ENCODE measurements at regions of chr4 and their contacts with region 1.

Region 1: GRCh38 chr4:189202182-189202868 is 738.3 kb upstream of the FRG1 start:
- DNase-seq: peak; percentile 59
- H3K4me3 ChIP-seq: peak overlapping the region in 2 of 3 experiments; percentile 34 to 47
- H3K27ac ChIP-seq: no peak overlapping the region
- H3K4me1 ChIP-seq: peaks cover 5% of the 10 kb centered on the region
- H3K27me3 ChIP-seq: no peaks in the 10 kb centered on the region
- CTCF ChIP-seq: peak; percentile 93 to 96

Region 2: GRCh38 chr4:187606581-187606980 is 1595.7 kb before region 1 on chr4:
- CTCF ChIA-PET with region 1: no interaction called
- dilution Hi-C with region 1: no loop called
- in situ Hi-C with region 1: no loop called
- intact Hi-C with region 1: loop called (anchors 5 kb)
- DNase-seq: peak; percentile 57
- H3K4me3 ChIP-seq: no peak overlapping the region
- H3K27ac ChIP-seq: no peak overlapping the region
- H3K4me1 ChIP-seq: peaks cover 16% of the 10 kb centered on the region
- H3K27me3 ChIP-seq: no peaks in the 10 kb centered on the region
- CTCF ChIP-seq: peak; percentile 87 to 89

Region 3: DNA sequence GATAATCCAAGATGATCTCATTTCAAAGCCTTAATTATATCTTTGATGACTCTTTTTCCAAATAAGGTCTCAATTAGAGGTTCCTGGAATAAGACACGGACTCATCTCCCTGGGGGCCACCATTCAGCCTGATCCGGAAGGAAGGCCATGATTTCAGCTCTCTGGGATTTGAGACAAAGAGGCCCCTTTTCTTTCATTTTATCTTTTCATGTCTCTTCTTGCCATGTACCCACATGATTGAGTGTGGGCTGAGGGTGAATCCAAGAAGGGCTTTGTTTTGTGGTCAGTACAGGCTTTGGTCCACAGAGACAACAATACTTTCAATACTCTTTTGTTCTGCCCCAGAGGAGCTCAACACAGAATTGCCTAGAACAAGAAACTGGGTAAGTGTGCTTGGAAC is 801.9 kb before region 1 on chr4:
- CTCF ChIA-PET with region 1: no interaction called
- dilution Hi-C with region 1: no loop called
- in situ Hi-C with region 1: no loop called
- intact Hi-C with region 1: loop called (anchors 10 kb)
- DNase-seq: peak; percentile 80
- H3K4me3 ChIP-seq: peak overlapping the region in 1 of 3 experiments; percentile 43
- H3K27ac ChIP-seq: peak overlapping the region; percentile 85
- H3K4me1 ChIP-seq: peaks cover 45% of the 10 kb centered on the region
- H3K27me3 ChIP-seq: no peaks in the 10 kb centered on the region
- CTCF ChIP-seq: no peak

Region 4: DNA sequence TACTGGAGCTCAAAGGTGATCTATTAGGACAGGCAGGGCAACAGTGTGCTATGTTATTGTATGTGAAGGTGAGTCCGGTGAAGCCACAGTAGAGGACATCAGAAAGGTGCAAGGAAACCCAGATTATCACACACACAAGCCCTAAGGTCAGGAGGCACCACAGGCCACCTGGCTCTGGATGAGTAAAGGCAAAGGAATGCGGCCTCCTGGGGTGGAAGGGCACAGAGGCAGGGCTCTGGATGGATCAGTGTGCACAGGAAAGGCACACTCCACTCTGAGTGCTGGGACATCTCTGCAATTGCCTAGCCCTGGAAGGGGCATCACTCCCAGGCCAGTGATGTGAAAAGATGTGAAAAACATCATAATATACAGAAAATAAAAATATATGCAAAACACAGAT is 379.6 kb before region 1 on chr4:
- CTCF ChIA-PET with region 1: no interaction called
- dilution Hi-C with region 1: no loop called
- in situ Hi-C with region 1: no loop called
- intact Hi-C with region 1: loop called (anchors 5 kb)
- DNase-seq: peak; percentile 21
- H3K4me3 ChIP-seq: no peak overlapping the region
- H3K27ac ChIP-seq: no peak overlapping the region
- H3K4me1 ChIP-seq: no peaks in the 10 kb centered on the region
- H3K27me3 ChIP-seq: no peaks in the 10 kb centered on the region
- CTCF ChIP-seq: no peak

Region 5: GRCh38 chr4:188971125-188971524 is 231.2 kb before region 1 on chr4:
- CTCF ChIA-PET with region 1: no interaction called
- dilution Hi-C with region 1: no loop called
- in situ Hi-C with region 1: no loop called
- intact Hi-C with region 1: loop called (anchors 1 kb)
- DNase-seq: peak; percentile 35
- H3K4me3 ChIP-seq: no peak overlapping the region
- H3K27ac ChIP-seq: no peak overlapping the region
- H3K4me1 ChIP-seq: peaks cover 1% of the 10 kb centered on the region
- H3K27me3 ChIP-seq: no peaks in the 10 kb centered on the region
- CTCF ChIP-seq: peak; percentile 42 to 62

Region 6: GRCh38 chr4:189162073-189162789 is 40.1 kb before region 1 on chr4:
- CTCF ChIA-PET with region 1: no interaction called
- dilution Hi-C with region 1: no loop called
- in situ Hi-C with region 1: no loop called
- intact Hi-C with region 1: no loop called
- DNase-seq: no peak
- H3K4me3 ChIP-seq: no peak overlapping the region
- H3K27ac ChIP-seq: no peak overlapping the region
- H3K4me1 ChIP-seq: no peaks in the 10 kb centered on the region
- H3K27me3 ChIP-seq: peaks cover 2% of the 10 kb centered on the region
- CTCF ChIP-seq: no peak

Region 7: GRCh38 chr4:189792924-189793618 is 590.7 kb after region 1 on chr4:
- CTCF ChIA-PET with region 1: no interaction called
- dilution Hi-C with region 1: no loop called
- in situ Hi-C with region 1: no loop called
- intact Hi-C with region 1: loop called (anchors 5 kb)
- DNase-seq: peak; percentile 52
- H3K4me3 ChIP-seq: no peak overlapping the region
- H3K27ac ChIP-seq: no peak overlapping the region
- H3K4me1 ChIP-seq: no peaks in the 10 kb centered on the region
- H3K27me3 ChIP-seq: no peaks in the 10 kb centered on the region
- CTCF ChIP-seq: peak; percentile 93 to 94

Measured in mammary epithelial cell (primary cell).